Left colon (tissue), 2 donors: ENCODE measurements at regions of chr16 and their contacts with region 1.

Region 1: GRCh38 chr16:27242868-27243590 is 25.5 kb downstream of the NSMCE1 start:
- DNase-seq: peak; percentile 48 to 52
- ATAC-seq: peak; percentile 17

Region 2: DNA sequence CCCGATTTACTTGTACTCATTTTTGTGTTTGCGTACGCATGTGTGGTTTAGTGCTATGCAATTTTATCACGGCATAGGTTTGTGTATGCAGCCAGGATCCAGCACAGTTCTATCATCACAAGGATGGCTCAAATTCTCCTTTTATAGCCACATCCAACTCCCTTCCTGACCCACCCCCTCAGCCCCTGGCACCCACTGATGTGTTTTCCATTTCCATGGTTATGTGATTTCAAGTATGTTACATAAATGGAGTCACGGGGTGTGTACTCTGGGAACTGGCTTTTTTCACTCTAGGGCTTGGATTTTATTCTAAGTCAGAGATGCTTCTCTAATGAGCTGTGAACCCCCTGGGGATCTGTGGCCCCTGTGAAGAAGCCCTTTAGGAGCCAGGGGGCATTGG is 87.5 kb after region 1 on chr16:
- intact Hi-C with region 1: loop called in 1 of 2 experiments (anchors 5 kb)
- DNase-seq: peak in 1 of 2 donors; percentile 76
- ATAC-seq: peak; percentile 12

Region 3: GRCh38 chr16:27341549-27341948 is 98.5 kb after region 1 on chr16:
- intact Hi-C with region 1: no loop called
- DNase-seq: no peak
- ATAC-seq: no peak

Region 4: GRCh38 chr16:27906883-27907282 is 663.9 kb after region 1 on chr16:
- intact Hi-C with region 1: no loop called
- DNase-seq: no peak
- ATAC-seq: no peak